ENCODE measurements at regions of chr2 and their contacts with region 1.

Region 1: DNA sequence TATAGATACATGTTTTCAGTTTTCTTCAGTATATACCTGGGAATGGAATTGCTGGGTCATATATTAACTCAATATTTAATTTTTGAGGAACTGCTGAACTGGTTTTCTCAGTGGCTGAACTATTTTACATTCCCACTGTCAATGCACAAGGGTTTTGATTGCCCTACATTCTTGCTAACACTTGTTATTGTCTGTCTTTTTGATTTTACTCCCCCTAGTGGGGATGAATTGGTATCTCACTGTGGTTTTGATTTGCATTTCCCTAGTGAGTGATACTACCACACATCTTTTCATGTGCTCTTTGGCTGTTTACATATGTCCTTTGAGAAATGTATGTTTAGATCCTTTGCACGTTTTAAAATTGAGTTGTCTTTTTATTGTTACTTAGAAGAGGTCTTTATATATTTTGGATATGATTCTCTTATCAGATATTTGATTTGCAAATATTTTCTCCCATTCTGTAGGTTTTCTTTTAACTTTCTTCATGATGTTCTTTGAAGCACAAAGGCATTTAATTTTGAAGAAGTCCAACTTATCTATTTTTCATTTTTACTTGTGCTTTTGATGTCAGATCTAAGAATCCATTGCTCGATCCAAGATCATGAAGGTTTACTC is 36.2 kb downstream of the ASB1 start:
- DNase-seq: peak in 4 of 5 donors; percentile 42 to 58 (median 54)
- H3K4me3 ChIP-seq: no peak overlapping the region
- H3K4me3 Mint-ChIP-seq: no peak overlapping the region
- H3K27ac ChIP-seq: no peak overlapping the region
- H3K27ac Mint-ChIP-seq: no peak overlapping the region
- H3K4me1 ChIP-seq: no peaks in the 10 kb centered on the region
- H3K4me1 Mint-ChIP-seq: peaks cover 0 to 3% (median 3%) of the 10 kb centered on the region in 4 donors
- H3K27me3 ChIP-seq: no peaks in the 10 kb centered on the region
- H3K27me3 Mint-ChIP-seq: no peaks in the 10 kb centered on the region

Region 2: GRCh38 chr2:238362626-238363025 is 100.3 kb before region 1 on chr2:
- CTCF ChIA-PET with region 1: interaction called, 40 read pairs
- POLR2A ChIA-PET with region 1: no interaction called
- intact Hi-C with region 1: loop called (anchors 1 kb)
- DNase-seq: no peak
- H3K4me3 ChIP-seq: no peak overlapping the region
- H3K4me3 Mint-ChIP-seq: no peak overlapping the region
- H3K27ac ChIP-seq: no peak overlapping the region
- H3K27ac Mint-ChIP-seq: no peak overlapping the region
- H3K4me1 ChIP-seq: no peaks in the 10 kb centered on the region
- H3K4me1 Mint-ChIP-seq: no peaks in the 10 kb centered on the region
- H3K27me3 ChIP-seq: no peaks in the 10 kb centered on the region
- H3K27me3 Mint-ChIP-seq: no peaks in the 10 kb centered on the region

Region 3: DNA sequence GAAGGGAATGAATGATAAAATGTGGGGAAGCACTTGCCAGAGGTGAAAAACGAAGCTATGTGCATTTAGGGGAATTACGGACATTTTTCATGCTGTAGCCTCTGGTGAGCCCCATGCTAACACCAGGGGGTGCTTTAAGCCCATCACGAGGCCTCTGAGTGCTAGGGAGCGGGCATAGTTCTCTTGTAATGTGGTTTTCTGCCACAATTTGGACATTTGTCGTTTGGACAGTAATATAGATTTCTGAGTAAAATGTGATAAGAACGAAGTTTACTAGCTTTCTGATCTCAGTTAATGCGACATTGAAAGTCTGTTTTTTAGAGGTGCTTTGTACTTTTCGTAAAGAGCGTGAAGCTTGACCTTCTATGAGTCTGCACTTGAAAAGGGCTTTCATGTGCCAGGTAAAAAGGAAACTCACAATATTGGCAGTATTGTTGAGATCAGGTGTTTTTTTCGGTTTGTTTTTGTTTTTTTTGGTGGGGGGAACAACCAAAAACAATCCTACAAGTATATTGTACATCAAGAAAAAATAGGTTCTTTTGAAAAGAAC is 92.0 kb before region 1 on chr2:
- CTCF ChIA-PET with region 1: interaction called, 44 read pairs
- POLR2A ChIA-PET with region 1: no interaction called
- intact Hi-C with region 1: loop called (anchors 1 kb)
- DNase-seq: peak; percentile 36 to 50 (median 39)
- H3K4me3 ChIP-seq: no peak overlapping the region
- H3K4me3 Mint-ChIP-seq: peak overlapping the region in 1 of 8 donors; percentile 18
- H3K27ac ChIP-seq: no peak overlapping the region
- H3K27ac Mint-ChIP-seq: no peak overlapping the region
- H3K4me1 ChIP-seq: no peaks in the 10 kb centered on the region
- H3K4me1 Mint-ChIP-seq: peaks cover 0 to 4% (median 3%) of the 10 kb centered on the region in 4 donors
- H3K27me3 ChIP-seq: no peaks in the 10 kb centered on the region
- H3K27me3 Mint-ChIP-seq: no peaks in the 10 kb centered on the region

Region 4: GRCh38 chr2:238427435-238428162 is 35.3 kb before region 1 on chr2:
- CTCF ChIA-PET with region 1: no interaction called
- POLR2A ChIA-PET with region 1: no interaction called
- intact Hi-C with region 1: no loop called
- DNase-seq: no peak
- H3K4me3 ChIP-seq: peak overlapping the region; percentile 76 to 90
- H3K4me3 Mint-ChIP-seq: peak overlapping the region; percentile 91 to 95 (median 93)
- H3K27ac ChIP-seq: peak overlapping the region; percentile 65
- H3K27ac Mint-ChIP-seq: peak overlapping the region; percentile 90 to 94 (median 92)
- H3K4me1 ChIP-seq: peaks cover 38% of the 10 kb centered on the region
- H3K4me1 Mint-ChIP-seq: peaks cover 32 to 54% (median 49%) of the 10 kb centered on the region in 4 donors
- H3K27me3 ChIP-seq: no peaks in the 10 kb centered on the region
- H3K27me3 Mint-ChIP-seq: no peaks in the 10 kb centered on the region

Region 5: DNA sequence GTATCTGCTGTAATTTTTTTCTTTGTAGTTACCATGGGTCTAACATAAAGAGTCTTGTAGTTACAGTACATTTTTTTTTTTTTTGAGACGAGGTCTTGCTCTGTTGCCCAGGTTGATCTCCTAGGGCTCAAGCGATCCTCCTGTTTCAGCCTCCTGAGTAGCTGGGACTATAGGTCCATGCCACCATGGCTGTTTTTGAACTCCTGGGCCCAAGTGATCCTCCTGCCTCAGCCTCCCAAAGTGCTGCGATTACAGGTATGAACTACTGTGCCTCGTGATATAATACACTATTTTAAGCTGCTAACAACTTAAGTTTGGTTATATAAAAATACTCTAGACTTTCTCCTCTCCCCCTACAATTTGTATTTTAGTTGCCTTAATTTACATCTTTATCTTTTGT is 10.1 kb after region 1 on chr2:
- CTCF ChIA-PET with region 1: interaction called, 10 read pairs
- POLR2A ChIA-PET with region 1: no interaction called
- intact Hi-C with region 1: no loop called
- DNase-seq: no peak
- H3K4me3 ChIP-seq: no peak overlapping the region
- H3K4me3 Mint-ChIP-seq: no peak overlapping the region
- H3K27ac ChIP-seq: no peak overlapping the region
- H3K27ac Mint-ChIP-seq: no peak overlapping the region
- H3K4me1 ChIP-seq: no peaks in the 10 kb centered on the region
- H3K4me1 Mint-ChIP-seq: peaks cover 0 to 8% (median under 1%) of the 10 kb centered on the region in 4 donors
- H3K27me3 ChIP-seq: no peaks in the 10 kb centered on the region
- H3K27me3 Mint-ChIP-seq: no peaks in the 10 kb centered on the region

Measured in CD4-positive, alpha-beta memory T cell (primary cell).